Heart right ventricle (tissue), 16 donors: ENCODE measurements at regions of chr12 and their contacts with region 1.

Region 1: DNA sequence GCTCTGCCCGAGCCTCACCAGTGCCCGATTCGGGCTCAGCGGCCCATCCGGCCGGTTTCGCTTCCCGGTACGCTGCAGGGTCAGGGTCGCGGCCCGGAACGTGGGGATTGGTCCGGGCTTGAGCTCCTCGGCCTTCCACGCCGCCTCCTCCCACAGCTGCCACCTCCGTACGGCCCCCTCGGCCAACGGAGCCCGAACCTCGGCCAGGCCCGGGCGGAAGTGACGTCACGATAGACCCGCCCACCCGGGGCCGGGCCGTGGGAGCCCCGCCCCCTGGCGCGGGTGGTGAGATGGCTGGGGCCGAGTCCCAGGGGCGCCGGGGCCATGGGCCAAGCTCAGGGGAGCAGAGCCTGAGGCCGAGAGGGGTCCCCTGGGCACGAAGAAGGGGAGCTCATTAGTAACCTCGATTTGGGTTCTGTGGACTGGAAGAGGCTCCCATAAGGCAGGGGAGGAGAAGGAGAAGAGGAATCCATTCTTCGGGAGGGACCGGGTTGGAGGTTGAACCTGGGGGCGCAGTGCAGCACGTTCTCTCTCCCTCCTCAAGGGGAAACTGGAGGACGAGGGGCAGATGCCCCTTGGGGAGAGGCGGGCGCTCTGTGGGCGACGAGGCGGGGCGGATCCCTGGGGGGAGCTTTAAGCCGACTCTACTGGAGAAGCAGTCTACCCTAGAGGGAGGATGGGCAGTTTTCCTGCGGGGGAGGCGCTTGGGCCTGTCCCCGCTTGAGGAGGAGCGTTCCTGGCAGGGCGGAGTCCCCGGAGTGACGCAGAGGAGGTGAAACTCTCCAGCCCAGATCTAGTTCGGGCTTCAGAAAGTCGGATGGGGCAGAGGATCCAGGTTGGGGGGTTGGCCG is at the start of gene MLF2:
- DNase-seq: peak; percentile 98 to 99
- ATAC-seq: peak; percentile 94 to 98 (median 97)
- H3K4me3 ChIP-seq: peak within 1 kb of the TSS; percentile 83 to 99 (median 90)
- H3K27ac ChIP-seq: peak within 1 kb of the TSS; percentile 93 to 99 (median 98)
- H3K4me1 ChIP-seq: peaks cover 9 to 31% (median 20%) of the 10 kb centered on the region in 9 donors
- H3K27me3 ChIP-seq: no peaks in the 10 kb centered on the region
- CTCF ChIP-seq: peak in 4 of 9 donors; percentile 93 to 99 (median 98)
- total RNA-seq, gene MLF2: 135 to 182 (median 148) TPM

Region 2: DNA sequence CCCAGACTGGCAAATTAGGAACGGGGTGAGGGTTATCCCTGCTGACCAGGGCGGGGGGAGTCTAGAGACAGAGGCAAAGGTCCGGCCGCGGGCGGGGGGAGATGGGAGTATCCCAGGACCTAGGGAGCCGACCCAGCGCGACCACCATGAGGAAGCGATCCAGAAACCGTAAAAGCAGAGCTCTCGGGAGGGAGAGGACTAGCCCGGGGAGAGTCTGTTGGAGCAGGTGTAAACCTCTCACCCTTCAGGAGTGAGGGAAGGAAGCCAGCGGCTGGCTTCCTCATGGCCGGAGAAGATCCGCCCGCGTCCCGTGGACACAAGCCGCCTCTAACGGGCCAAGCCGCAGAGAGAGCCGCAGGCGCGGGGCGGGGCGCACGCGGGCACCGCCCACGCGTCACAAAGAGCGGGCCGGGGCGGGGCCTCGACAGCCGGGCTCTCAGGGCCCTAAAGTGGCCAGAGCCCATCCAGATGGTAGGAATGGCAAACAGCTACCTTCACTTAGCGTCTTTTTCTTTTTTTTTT is 106.0 kb before region 1 on chr12 and contains the start of gene ACRBP:
- intact Hi-C with region 1: no loop called
- DNase-seq: peak; percentile 74 to 87
- ATAC-seq: peak; percentile 88 to 96 (median 92)
- H3K4me3 ChIP-seq: peak within 1 kb of the TSS in 9 of 10 donors; percentile 35 to 63 (median 56)
- H3K27ac ChIP-seq: peak within 1 kb of the TSS in 7 of 10 donors; percentile 38 to 85 (median 49)
- H3K4me1 ChIP-seq: peaks cover 0 to 33% (median 9%) of the 10 kb centered on the region in 9 donors
- H3K27me3 ChIP-seq: no peaks in the 10 kb centered on the region
- CTCF ChIP-seq: no peak
- total RNA-seq, gene ACRBP: 0.25 to 4.1 (median 0.79) TPM in 9 of 10 donors, not detected in the other

Region 3: DNA sequence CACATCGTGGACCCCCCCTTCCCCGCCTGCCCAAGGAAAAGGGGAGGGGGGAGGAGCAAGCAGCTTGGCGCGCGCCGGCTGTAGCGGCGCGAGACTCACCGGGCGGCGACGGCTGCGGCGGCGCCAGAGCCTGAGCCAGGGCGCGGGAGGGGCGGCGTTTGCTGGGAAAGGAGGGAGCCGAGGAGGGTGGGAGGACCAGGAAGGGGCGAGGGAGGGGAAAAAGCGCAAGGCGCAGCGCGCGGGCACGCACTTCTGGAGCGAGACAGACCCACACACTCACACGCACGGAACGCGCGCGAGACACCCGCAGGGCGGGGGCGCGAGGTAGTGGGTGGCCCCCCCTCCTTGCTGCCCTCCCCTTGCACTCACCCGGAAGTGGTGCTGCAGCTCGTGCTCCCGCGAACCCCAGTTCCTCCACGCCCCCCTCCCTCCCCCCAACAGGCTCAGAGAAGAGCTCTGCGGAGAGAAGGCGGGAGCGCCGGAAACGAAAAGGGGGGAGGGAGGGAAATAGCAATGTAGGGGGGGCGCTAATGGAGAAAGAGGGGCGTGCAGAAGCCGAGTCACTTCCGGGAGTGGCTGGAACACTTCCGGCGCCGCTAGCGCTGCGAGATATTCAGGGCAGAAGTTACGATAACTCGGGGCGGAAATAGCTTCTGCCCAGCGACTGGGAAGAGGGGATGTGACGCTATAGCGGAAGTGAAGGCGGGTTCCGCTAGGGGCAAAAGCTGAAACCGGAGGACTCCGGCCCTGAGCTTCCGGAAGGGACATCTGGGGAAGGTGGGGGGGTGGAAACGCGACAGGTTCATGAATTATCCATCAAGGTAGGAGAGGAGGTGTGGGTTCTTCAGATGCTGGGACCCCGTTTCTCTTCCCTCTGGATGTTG is 63.9 kb before region 1 on chr12 and contains the start of gene ZNF384:
- intact Hi-C with region 1: loop called in 3 of 10 experiments (anchors 1 to 2 kb)
- DNase-seq: peak; percentile 94 to 99
- ATAC-seq: peak; percentile 91 to 97 (median 96)
- H3K4me3 ChIP-seq: peak within 1 kb of the TSS; percentile 65 to 98 (median 91)
- H3K27ac ChIP-seq: peak within 1 kb of the TSS; percentile 95 to 100 (median 98)
- H3K4me1 ChIP-seq: peaks cover 3 to 55% (median 40%) of the 10 kb centered on the region in 9 donors
- H3K27me3 ChIP-seq: peaks cover 0 to 1% (median 0%) of the 10 kb centered on the region in 7 donors
- CTCF ChIP-seq: peak in 5 of 9 donors; percentile 11 to 31 (median 22)
- total RNA-seq, gene ZNF384: 25.1 to 36.0 (median 29.0) TPM

Region 4: GRCh38 chr12:6723607-6724396 is 29.3 kb before region 1 on chr12 and contains the start of gene COPS7A:
- intact Hi-C with region 1: loop called in 1 of 10 experiments (anchors 2 kb)
- DNase-seq: peak; percentile 97 to 99
- ATAC-seq: peak; percentile 99 to 100 (median 99)
- H3K4me3 ChIP-seq: peak within 1 kb of the TSS; percentile 40 to 90 (median 64)
- H3K27ac ChIP-seq: peak within 1 kb of the TSS; percentile 81 to 95 (median 88)
- H3K4me1 ChIP-seq: peaks cover 0 to 20% (median 14%) of the 10 kb centered on the region in 9 donors
- H3K27me3 ChIP-seq: no peaks in the 10 kb centered on the region
- CTCF ChIP-seq: no peak
- total RNA-seq, gene COPS7A: 67.4 to 89.8 (median 77.9) TPM

Region 5: DNA sequence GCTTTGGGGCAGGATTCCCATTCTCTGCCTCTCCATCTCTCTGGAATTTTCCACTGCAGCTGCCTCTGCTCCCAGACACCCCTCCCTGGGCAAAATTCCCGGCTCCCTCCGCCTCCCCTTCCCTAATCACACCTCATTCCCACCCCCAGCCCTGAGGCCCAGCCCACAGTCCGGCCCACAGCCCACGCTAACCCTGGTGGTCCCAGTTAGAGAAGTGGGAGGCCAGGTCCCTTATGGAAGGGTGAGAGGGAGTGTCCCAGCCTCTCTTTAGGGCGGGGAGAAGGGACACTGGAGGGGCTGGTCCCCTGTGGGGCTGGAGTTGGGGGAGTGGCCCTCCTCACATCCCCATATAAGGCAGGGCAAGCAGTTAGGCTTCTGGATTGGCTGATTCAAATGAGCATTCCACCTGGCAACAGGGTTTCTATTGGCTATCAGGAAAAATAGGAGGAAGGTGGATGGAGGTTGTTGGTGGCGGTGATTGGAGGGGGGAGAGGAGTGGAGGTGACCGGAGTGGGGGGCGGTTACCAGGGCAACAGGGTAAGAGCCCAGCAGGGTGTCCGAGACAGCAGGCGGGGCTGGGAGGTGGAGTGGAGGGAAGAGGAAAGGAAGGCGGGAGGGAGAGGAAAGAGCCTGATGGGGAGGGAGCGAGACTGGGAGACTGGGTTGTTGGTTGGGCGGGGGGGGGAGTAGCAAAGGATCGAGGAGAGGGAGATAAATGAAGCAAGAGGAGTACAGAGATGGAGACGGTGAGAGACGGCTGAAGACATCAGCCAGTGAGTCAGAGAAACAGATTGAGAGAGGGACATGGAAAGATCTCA is 11.1 kb after region 1 on chr12:
- intact Hi-C with region 1: loop called in 4 of 10 experiments (anchors 1 to 2 kb)
- DNase-seq: peak; percentile 93 to 96
- ATAC-seq: peak; percentile 80 to 92 (median 88)
- H3K4me3 ChIP-seq: peak overlapping the region in 9 of 10 donors; percentile 13 to 81 (median 31)
- H3K27ac ChIP-seq: peak overlapping the region; percentile 87 to 99 (median 94)
- H3K4me1 ChIP-seq: peaks cover 7 to 52% (median 42%) of the 10 kb centered on the region in 9 donors
- H3K27me3 ChIP-seq: peaks cover 0 to 27% (median 0%) of the 10 kb centered on the region in 7 donors
- CTCF ChIP-seq: no peak

Region 6: GRCh38 chr12:6778574-6779550 is 25.7 kb after region 1 on chr12:
- intact Hi-C with region 1: loop called in 6 of 10 experiments (anchors 1 to 2 kb)
- DNase-seq: peak; percentile 92 to 97
- ATAC-seq: peak; percentile 94 to 97 (median 96)
- H3K4me3 ChIP-seq: peak overlapping the region in 9 of 10 donors; percentile 35 to 60 (median 43)
- H3K27ac ChIP-seq: peak overlapping the region in 9 of 10 donors; percentile 49 to 73 (median 62)
- H3K4me1 ChIP-seq: peaks cover 0 to 30% (median 15%) of the 10 kb centered on the region in 9 donors
- H3K27me3 ChIP-seq: peaks cover 0 to 40% (median 4%) of the 10 kb centered on the region in 7 donors
- CTCF ChIP-seq: peak in 8 of 9 donors; percentile 92 to 97 (median 96)

Region 7: GRCh38 chr12:6788972-6789924 is 36.1 kb after region 1 on chr12 and contains the start of gene CD4:
- intact Hi-C with region 1: no loop called
- DNase-seq: peak; percentile 59 to 70
- ATAC-seq: peak; percentile 50 to 82 (median 72)
- H3K4me3 ChIP-seq: peak within 1 kb of the TSS in 7 of 10 donors; percentile 7 to 56 (median 41)
- H3K27ac ChIP-seq: peak within 1 kb of the TSS in 5 of 10 donors; percentile 14 to 86 (median 28)
- H3K4me1 ChIP-seq: peaks cover 0 to 51% (median 15%) of the 10 kb centered on the region in 9 donors
- H3K27me3 ChIP-seq: peaks cover 0 to 1% (median 0%) of the 10 kb centered on the region in 7 donors
- CTCF ChIP-seq: no peak
- total RNA-seq, gene CD4: 2.8 to 44.3 (median 5.0) TPM

Region 8: DNA sequence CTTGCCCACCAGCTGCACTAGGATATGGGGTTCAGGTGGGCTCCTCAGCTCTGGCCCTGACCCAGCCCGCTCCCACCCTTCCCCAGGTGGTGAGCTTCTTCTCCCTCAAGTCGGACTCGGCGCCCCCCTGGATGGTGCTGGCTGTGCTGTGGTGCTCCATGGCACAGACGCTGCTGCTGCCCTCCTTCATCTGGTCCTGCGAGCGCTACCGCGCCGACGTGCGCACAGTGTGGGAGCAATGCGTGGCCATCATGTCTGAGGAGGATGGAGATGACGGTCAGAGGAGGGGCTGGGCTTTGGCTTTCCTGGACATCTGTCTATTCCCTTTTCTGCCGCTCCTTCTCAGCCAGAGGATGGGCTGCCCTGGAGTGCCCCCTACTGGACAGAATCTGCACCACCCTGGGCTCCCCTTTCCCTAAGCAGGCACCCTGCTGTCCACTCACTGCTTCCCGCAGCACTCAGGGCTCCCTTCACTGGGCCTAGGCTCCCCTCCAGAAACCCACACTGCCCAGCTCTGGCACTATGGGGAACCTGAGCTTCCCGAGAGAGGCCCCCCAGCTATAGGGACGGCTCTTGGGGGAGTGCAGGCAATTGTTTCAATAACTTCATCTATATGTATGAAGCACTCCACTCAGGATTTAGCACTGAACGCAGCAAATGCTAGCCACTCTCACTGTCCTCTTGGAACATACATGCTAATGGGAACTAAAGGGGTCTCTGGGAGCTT is 72.4 kb after region 1 on chr12:
- intact Hi-C with region 1: loop called in 9 of 10 experiments (anchors 2 to 10 kb)
- DNase-seq: peak; percentile 87 to 89
- ATAC-seq: peak; percentile 54 to 73 (median 62)
- H3K4me3 ChIP-seq: peak overlapping the region in 5 of 10 donors; percentile 17 to 39 (median 25)
- H3K27ac ChIP-seq: peak overlapping the region in 1 of 10 donors; percentile 18
- H3K4me1 ChIP-seq: peaks cover 15 to 65% (median 45%) of the 10 kb centered on the region in 9 donors
- H3K27me3 ChIP-seq: peaks cover 0 to 59% (median 0%) of the 10 kb centered on the region in 7 donors
- CTCF ChIP-seq: peak; percentile 80 to 97 (median 95)

Region 9: GRCh38 chr12:6851921-6852650 is 98.9 kb after region 1 on chr12 and contains the start of gene USP5:
- intact Hi-C with region 1: loop called in 1 of 10 experiments (anchors 1 kb)
- DNase-seq: peak; percentile 99
- ATAC-seq: peak; percentile 91 to 96 (median 92)
- H3K4me3 ChIP-seq: peak within 1 kb of the TSS; percentile 50 to 93 (median 68)
- H3K27ac ChIP-seq: peak within 1 kb of the TSS; percentile 18 to 99 (median 94)
- H3K4me1 ChIP-seq: peaks cover 3 to 26% (median 16%) of the 10 kb centered on the region in 9 donors
- H3K27me3 ChIP-seq: no peaks in the 10 kb centered on the region
- CTCF ChIP-seq: peak in 4 of 9 donors; percentile 8 to 36 (median 10)
- total RNA-seq, gene USP5: 64.8 to 95.5 (median 74.1) TPM